ENCODE measurements at regions of chr17 and their contacts with region 1.

Region 1: DNA sequence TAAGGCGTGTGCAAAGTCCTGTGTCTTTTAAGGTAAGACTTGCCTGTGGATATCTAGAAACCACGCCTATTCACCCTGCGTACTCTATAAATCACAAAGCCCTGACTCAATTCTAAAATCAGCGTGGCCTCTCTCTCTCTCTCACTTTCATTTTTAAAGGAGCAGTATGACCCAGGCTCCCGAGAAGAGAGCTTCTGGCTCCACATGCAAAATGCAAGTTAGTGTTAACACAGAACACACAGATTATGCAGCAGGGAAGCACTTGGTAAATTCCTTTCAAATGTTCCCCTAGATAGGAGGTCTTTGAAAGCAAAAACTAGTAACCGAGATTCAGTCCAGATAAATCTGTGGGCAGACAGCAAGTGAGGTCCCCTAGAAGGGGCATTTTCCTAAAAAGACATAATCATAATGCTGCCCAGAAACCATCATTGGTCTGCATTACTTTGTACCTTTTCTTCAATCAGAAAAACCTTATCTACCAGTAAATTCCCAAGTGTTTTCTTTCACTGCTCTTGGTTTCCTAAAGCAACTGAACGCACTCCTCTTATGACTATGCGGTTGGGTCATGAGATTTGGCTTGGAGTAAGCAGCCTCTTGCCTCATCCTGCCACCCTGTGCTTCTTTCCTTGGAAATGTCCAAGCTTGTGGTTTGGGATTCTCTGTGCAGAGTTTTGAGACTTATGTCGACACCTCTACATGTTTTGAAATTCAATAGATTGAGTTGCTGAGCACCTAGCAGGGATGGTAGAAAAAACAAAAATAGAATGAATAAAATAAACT is 31.7 kb upstream of the KCNJ2 start:
- DNase-seq: peak; percentile 95
- ATAC-seq: peak; percentile 85
- H3K4me3 ChIP-seq: peak overlapping the region; percentile 59
- H3K27ac ChIP-seq: peak overlapping the region; percentile 98; the same call in 1 of the 2 replicates
- H3K4me1 ChIP-seq: peaks cover 14% of the 10 kb centered on the region
- H3K27me3 ChIP-seq: no peaks in the 10 kb centered on the region
- CTCF ChIP-seq: 0 out of 2 replicates have a peak, but pooled peaks have one; percentile 3
- POLR2A ChIP-seq: no peak
- RAD21 ChIP-seq: peak; percentile 20; the same call in 1 of the 2 replicates

Region 2: DNA sequence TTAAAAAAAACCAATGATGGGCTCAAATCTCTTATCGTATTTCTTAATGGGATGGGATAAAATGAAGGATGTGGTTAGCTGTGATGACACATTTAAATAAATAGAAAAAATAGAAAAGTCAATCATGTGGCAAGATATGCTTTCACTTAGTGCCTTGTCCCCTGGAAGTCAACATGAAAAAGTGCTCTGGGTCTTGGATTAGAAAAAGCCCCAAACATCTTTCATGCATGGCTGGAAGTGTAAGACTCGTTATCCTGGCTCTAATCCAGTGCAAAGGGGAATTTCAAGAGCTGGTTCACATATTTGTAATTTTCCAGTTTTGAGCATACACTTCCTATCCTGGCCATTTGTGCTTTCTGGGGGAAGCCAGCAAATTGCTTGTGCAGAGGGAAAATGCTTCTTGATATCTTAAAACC is 562.3 kb before region 1 on chr17:
- CTCF ChIA-PET with region 1: no interaction called
- POLR2A ChIA-PET with region 1: no interaction called
- dilution Hi-C with region 1: no loop called
- in situ Hi-C with region 1: no loop called
- intact Hi-C with region 1: loop called (anchors 2 kb)
- DNase-seq: peak; percentile 87
- ATAC-seq: peak; percentile 47
- H3K4me3 ChIP-seq: no peak overlapping the region
- H3K27ac ChIP-seq: peak overlapping the region; percentile 26; the same call in 1 of the 2 replicates
- H3K4me1 ChIP-seq: peaks cover 13% of the 10 kb centered on the region
- H3K27me3 ChIP-seq: no peaks in the 10 kb centered on the region
- CTCF ChIP-seq: no peak
- POLR2A ChIP-seq: no peak
- RAD21 ChIP-seq: no peak

Region 3: DNA sequence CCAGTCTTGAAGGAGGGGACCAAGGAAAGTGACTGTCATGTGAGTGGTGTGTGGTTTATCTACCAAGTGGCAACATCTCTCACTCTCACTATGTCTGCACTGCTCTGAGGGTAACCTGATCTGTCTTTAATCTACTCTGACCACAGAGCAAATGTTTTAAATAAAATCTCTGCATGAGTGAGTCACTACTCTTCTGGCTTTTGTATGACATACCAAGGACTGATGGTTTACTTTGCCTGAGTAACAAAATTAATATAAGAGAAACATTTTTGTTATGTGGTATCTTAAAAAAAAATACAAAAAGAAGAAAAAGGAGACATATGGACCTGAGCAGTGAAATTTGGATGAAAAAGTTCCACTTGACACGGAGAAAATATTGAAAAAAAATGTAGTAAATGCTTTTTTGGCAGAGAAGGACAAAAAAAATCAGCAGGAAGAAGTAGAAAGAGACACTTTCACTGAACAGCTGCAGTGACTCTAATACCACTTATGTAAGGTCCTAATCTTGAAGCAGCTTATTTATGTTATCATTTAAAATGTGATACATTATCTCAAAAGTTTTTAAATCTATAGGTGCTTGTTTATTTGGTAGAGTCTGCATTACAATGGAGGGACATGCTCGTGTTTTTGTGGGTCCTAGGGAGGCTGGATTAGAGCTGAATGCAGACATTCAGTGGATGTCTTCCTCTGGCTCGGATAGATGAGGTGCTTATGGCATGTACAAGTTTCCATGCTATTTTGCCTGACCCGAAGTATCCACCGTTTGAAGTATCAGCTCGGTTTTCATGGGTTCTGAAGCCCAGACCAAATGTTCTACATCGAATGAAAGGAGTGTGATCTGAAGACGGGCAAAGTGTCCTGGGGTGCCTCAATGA is 482.4 kb before region 1 on chr17:
- CTCF ChIA-PET with region 1: no interaction called
- POLR2A ChIA-PET with region 1: no interaction called
- dilution Hi-C with region 1: no loop called
- in situ Hi-C with region 1: no loop called
- intact Hi-C with region 1: loop called (anchors 2 kb)
- DNase-seq: peak; percentile 95
- ATAC-seq: peak; percentile 94
- H3K4me3 ChIP-seq: no peak overlapping the region
- H3K27ac ChIP-seq: peak overlapping the region; percentile 96
- H3K4me1 ChIP-seq: peaks cover 8% of the 10 kb centered on the region
- H3K27me3 ChIP-seq: peaks cover 19% of the 10 kb centered on the region
- CTCF ChIP-seq: no peak
- POLR2A ChIP-seq: no peak
- RAD21 ChIP-seq: no peak

Region 4: GRCh38 chr17:69870091-69870530 is 267.5 kb before region 1 on chr17:
- CTCF ChIA-PET with region 1: no interaction called
- POLR2A ChIA-PET with region 1: no interaction called
- dilution Hi-C with region 1: no loop called
- in situ Hi-C with region 1: no loop called
- intact Hi-C with region 1: loop called (anchors 2 kb)
- DNase-seq: peak; percentile 91
- ATAC-seq: peak; percentile 59
- H3K4me3 ChIP-seq: no peak overlapping the region
- H3K27ac ChIP-seq: peak overlapping the region; percentile 78
- H3K4me1 ChIP-seq: peaks cover 21% of the 10 kb centered on the region
- H3K27me3 ChIP-seq: no peaks in the 10 kb centered on the region
- CTCF ChIP-seq: no peak
- POLR2A ChIP-seq: no peak
- RAD21 ChIP-seq: no peak

Region 5: DNA sequence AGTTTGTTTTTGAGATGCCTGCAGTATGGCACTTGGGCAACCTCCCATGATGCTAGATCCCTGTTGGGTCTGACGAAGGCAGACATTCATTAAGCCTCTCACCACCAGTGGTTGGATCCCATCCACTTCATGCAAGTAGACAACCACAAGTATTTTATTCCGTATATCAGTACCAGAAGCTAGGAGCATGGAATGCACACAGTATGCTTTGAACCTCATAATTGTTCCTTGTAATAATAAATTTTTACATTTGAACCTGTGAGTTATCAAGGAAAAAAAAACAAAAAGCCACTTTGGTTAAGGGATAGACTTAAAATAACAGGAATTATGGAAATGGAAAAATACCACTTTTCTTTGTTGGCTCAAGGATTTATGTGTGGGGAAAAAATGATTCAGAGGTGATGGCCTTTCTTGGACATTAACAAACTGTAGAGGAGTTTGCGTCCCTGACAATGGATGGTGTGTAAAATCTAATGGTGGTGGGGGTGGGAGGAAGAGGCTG is 169.7 kb before region 1 on chr17:
- CTCF ChIA-PET with region 1: no interaction called
- POLR2A ChIA-PET with region 1: no interaction called
- dilution Hi-C with region 1: no loop called
- in situ Hi-C with region 1: no loop called
- intact Hi-C with region 1: loop called (anchors 5 kb)
- DNase-seq: peak; percentile 98
- ATAC-seq: peak; percentile 96
- H3K4me3 ChIP-seq: no peak overlapping the region
- H3K27ac ChIP-seq: peak overlapping the region; percentile 34; the same call in 1 of the 2 replicates
- H3K4me1 ChIP-seq: no peaks in the 10 kb centered on the region
- H3K27me3 ChIP-seq: no peaks in the 10 kb centered on the region
- CTCF ChIP-seq: no peak
- POLR2A ChIP-seq: no peak
- RAD21 ChIP-seq: no peak

Measured in IMR-90 (cell line).